ENCODE measurements at regions of chr2 and their contacts with region 1.

Region 1: DNA sequence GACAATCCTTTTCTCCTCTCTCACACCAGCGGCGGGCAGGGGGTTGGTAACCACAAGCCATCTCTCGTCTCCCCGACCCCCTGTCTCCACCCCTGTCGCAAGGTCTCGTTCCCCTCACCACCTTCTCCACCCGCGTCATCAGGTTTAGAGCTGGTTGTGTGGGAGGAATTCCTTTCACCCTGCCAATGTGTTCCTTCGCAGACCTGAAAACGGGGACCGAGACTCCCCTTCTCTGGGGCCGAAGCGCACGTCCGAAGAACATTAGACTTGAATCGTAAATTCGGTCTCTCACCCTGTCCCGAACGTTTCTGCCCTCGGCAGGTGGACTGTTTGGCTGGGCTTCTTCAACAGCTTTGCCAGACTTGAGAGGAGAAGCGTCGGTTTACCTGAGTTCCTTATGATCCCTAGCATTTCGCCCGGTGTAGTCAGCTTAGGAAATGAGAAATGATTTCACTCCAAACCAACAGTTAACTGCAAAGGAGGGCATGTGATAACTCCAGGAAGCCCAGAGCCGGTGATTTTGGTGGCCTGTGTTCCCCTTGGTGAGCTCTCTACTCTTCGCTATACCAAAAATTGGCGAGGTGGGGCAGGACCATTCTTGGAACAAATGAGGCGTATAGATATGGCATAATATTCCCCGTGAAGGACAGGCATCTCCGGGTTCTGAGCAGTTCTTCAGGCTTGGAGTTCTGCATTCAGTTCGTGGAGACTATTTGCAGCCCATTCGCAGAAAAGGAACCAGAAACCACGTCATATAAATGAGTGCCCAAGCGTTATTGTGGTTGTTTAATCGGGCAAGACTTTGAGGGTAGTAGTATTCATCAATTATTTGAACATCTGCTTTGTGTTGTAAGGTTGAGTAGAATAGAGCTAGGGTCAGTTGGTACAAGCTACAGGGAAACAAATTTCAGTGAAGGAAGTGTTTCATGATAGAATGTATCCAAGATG is 694 bp downstream of the CFAP36 start:
- DNase-seq: peak in 30 of 35 experiments; percentile 3 to 57 (median 24)
- ATAC-seq: peak; percentile 17 to 35 (median 28)
- H3K4me3 ChIP-seq: peak overlapping the region; percentile 88 to 91
- H3K4me3 Mint-ChIP-seq: peak overlapping the region; percentile 95 to 99 (median 97)
- H3K27ac ChIP-seq: peak overlapping the region; percentile 85
- H3K27ac Mint-ChIP-seq: peak overlapping the region; percentile 99 to 100
- H3K4me1 ChIP-seq: peaks cover 13 to 16% of the 10 kb centered on the region in 2 experiments
- H3K4me1 Mint-ChIP-seq: peaks cover 17 to 18% (median 17%) of the 10 kb centered on the region in 3 donors
- H3K27me3 ChIP-seq: no peaks in the 10 kb centered on the region
- H3K27me3 Mint-ChIP-seq: no peaks in the 10 kb centered on the region

Region 2: GRCh38 chr2:55530539-55531081 is 10.4 kb after region 1 on chr2:
- CTCF ChIA-PET with region 1: interaction called, 7 to 8 read pairs
- POLR2A ChIA-PET with region 1: interaction called, 9 to 16 read pairs
- DNase-seq: peak in 8 of 35 experiments; percentile 2 to 39 (median 11)
- ATAC-seq: peak; percentile 76 to 86 (median 85)
- H3K4me3 ChIP-seq: no peak overlapping the region
- H3K4me3 Mint-ChIP-seq: peak overlapping the region; percentile 3 to 44 (median 9)
- H3K27ac ChIP-seq: peak overlapping the region; percentile 67
- H3K27ac Mint-ChIP-seq: peak overlapping the region; percentile 89 to 90
- H3K4me1 ChIP-seq: peaks cover 7 to 9% of the 10 kb centered on the region in 2 experiments
- H3K4me1 Mint-ChIP-seq: peaks cover 21 to 23% (median 21%) of the 10 kb centered on the region in 3 donors
- H3K27me3 ChIP-seq: no peaks in the 10 kb centered on the region
- H3K27me3 Mint-ChIP-seq: no peaks in the 10 kb centered on the region

Region 3: GRCh38 chr2:55567298-55567697 is 47.1 kb after region 1 on chr2:
- CTCF ChIA-PET with region 1: interaction called in 1 of 2 experiments, 3 read pairs
- POLR2A ChIA-PET with region 1: interaction called, 3 to 11 read pairs
- DNase-seq: no peak
- ATAC-seq: no peak
- H3K4me3 ChIP-seq: no peak overlapping the region
- H3K4me3 Mint-ChIP-seq: no peak overlapping the region
- H3K27ac ChIP-seq: no peak overlapping the region
- H3K27ac Mint-ChIP-seq: peak overlapping the region; percentile 68 to 80
- H3K4me1 ChIP-seq: peaks cover 4 to 8% of the 10 kb centered on the region in 2 experiments
- H3K4me1 Mint-ChIP-seq: peaks cover 23 to 35% (median 32%) of the 10 kb centered on the region in 3 donors
- H3K27me3 ChIP-seq: no peaks in the 10 kb centered on the region
- H3K27me3 Mint-ChIP-seq: no peaks in the 10 kb centered on the region

Region 4: GRCh38 chr2:55617175-55618024 is 97.2 kb after region 1 on chr2 and contains the start of gene PPP4R3B:
- CTCF ChIA-PET with region 1: interaction called in 1 of 2 experiments, 12 read pairs
- POLR2A ChIA-PET with region 1: interaction called, 4 to 49 read pairs
- DNase-seq: peak; percentile 97 to 100 (median 99)
- ATAC-seq: peak; percentile 84 to 92 (median 87)
- H3K4me3 ChIP-seq: peak within 1 kb of the TSS; percentile 77 to 100
- H3K4me3 Mint-ChIP-seq: no peak within 1 kb of the TSS
- H3K27ac ChIP-seq: peak within 1 kb of the TSS; percentile 99
- H3K27ac Mint-ChIP-seq: no peak within 1 kb of the TSS
- H3K4me1 ChIP-seq: peaks cover 32 to 38% of the 10 kb centered on the region in 2 experiments
- H3K4me1 Mint-ChIP-seq: peaks cover 28 to 60% (median 30%) of the 10 kb centered on the region in 3 donors
- H3K27me3 ChIP-seq: no peaks in the 10 kb centered on the region
- H3K27me3 Mint-ChIP-seq: no peaks in the 10 kb centered on the region
- total RNA-seq, gene PPP4R3B: 86.4 to 93.0 (median 87.8) TPM

Region 5: GRCh38 chr2:55672630-55673029 is 152.4 kb after region 1 on chr2:
- CTCF ChIA-PET with region 1: no interaction called
- POLR2A ChIA-PET with region 1: no interaction called
- DNase-seq: no peak
- ATAC-seq: no peak
- H3K4me3 ChIP-seq: no peak overlapping the region
- H3K4me3 Mint-ChIP-seq: no peak overlapping the region
- H3K27ac ChIP-seq: no peak overlapping the region
- H3K27ac Mint-ChIP-seq: no peak overlapping the region
- H3K4me1 ChIP-seq: no peaks in the 10 kb centered on the region
- H3K4me1 Mint-ChIP-seq: no peaks in the 10 kb centered on the region
- H3K27me3 ChIP-seq: no peaks in the 10 kb centered on the region
- H3K27me3 Mint-ChIP-seq: no peaks in the 10 kb centered on the region

Region 6: GRCh38 chr2:55707751-55708150 is 187.5 kb after region 1 on chr2:
- CTCF ChIA-PET with region 1: no interaction called
- POLR2A ChIA-PET with region 1: no interaction called
- DNase-seq: no peak
- ATAC-seq: no peak
- H3K4me3 ChIP-seq: no peak overlapping the region
- H3K4me3 Mint-ChIP-seq: no peak overlapping the region
- H3K27ac ChIP-seq: no peak overlapping the region
- H3K27ac Mint-ChIP-seq: no peak overlapping the region
- H3K4me1 ChIP-seq: no peaks in the 10 kb centered on the region
- H3K4me1 Mint-ChIP-seq: no peaks in the 10 kb centered on the region
- H3K27me3 ChIP-seq: no peaks in the 10 kb centered on the region
- H3K27me3 Mint-ChIP-seq: peaks cover 13 to 23% of the 10 kb centered on the region in 2 donors

Region 7: DNA sequence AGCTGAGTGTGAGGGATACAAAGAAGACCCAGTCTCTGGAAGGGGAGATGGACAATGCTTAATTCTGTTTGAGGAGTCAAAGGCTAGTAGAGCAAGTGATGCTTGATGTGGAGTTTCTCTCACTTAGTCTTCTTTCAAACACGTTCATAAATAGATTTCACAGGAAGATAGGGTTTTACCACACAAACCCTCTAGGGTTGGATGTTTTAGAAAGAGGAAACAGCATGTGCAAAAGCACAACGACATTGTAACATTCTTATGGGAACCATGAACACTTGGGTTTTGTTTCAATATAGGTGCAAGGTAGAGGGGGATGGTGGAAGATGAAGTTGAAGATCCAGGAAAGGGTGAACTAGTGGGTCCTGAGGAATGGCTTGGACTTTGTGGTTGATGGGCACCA is 414.1 kb after region 1 on chr2:
- CTCF ChIA-PET with region 1: no interaction called
- POLR2A ChIA-PET with region 1: no interaction called
- DNase-seq: no peak
- ATAC-seq: no peak
- H3K4me3 ChIP-seq: no peak overlapping the region
- H3K4me3 Mint-ChIP-seq: no peak overlapping the region
- H3K27ac ChIP-seq: no peak overlapping the region
- H3K27ac Mint-ChIP-seq: no peak overlapping the region
- H3K4me1 ChIP-seq: no peaks in the 10 kb centered on the region
- H3K4me1 Mint-ChIP-seq: no peaks in the 10 kb centered on the region
- H3K27me3 ChIP-seq: no peaks in the 10 kb centered on the region
- H3K27me3 Mint-ChIP-seq: peaks cover 0 to 5% of the 10 kb centered on the region in 2 donors